ENCODE measurements at regions of chr14 and their contacts with region 1.

Region 1: DNA sequence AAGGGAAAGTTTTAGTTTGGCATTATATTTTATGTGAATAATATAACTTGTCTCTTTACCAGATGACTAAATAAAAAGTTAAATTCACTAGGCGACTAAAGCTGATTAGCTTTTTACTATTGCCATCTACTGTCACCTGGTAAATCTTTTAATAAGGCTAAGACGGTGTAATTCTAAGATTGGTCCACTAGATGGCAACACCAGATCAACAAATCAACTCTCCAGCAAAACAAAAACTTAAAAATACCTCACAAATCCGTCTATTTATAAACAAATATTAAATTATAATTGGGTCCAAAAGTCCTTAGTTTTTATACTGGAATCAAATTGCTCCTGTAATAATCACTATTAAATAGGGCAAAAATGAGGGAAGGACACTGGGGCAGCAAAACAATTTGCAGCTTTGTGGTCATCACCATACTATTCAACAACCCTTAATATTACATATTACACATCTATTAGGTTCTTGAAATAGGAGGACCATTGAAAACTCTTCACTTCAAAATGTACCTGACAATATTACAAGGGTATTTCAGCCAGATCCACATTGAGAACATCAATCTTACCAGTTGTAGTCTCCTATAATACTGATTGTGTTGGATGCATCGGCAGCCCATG is 47.9 kb downstream of the GALC start:
- DNase-seq: peak in 1 of 42 donors; percentile 23

Region 2: GRCh38 chr14:87824266-87824665 is 120.8 kb before region 1 on chr14:
- intact Hi-C with region 1: no loop called
- DNase-seq: no peak

Region 3: DNA sequence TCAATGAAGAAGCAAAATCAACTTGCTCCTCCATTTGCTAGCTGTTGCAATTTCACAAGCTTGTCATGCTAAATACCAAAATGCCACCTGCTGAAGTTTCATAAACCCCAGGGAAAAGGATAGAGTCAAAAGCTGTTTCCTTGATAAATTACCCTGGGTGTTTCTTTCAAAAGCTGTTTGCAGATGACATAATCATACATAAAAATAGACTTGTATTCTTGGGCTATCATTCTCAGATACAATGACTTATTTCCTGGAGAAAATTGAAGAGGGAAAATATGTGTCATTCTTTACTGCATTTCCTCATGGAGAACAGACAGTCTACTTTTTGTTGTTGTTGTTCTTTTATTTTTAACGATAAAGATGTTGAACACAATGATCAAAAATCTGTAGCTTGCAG is 71.4 kb before region 1 on chr14:
- intact Hi-C with region 1: no loop called
- DNase-seq: no peak

Region 4: GRCh38 chr14:88168498-88169165 is 223.5 kb after region 1 on chr14:
- intact Hi-C with region 1: loop called (anchors 5 kb)
- DNase-seq: peak in 13 of 42 donors; percentile 6 to 53 (median 23)